Ovary (tissue), 10 donors: ENCODE measurements at regions of chr2 and their contacts with region 1.

Region 1: DNA sequence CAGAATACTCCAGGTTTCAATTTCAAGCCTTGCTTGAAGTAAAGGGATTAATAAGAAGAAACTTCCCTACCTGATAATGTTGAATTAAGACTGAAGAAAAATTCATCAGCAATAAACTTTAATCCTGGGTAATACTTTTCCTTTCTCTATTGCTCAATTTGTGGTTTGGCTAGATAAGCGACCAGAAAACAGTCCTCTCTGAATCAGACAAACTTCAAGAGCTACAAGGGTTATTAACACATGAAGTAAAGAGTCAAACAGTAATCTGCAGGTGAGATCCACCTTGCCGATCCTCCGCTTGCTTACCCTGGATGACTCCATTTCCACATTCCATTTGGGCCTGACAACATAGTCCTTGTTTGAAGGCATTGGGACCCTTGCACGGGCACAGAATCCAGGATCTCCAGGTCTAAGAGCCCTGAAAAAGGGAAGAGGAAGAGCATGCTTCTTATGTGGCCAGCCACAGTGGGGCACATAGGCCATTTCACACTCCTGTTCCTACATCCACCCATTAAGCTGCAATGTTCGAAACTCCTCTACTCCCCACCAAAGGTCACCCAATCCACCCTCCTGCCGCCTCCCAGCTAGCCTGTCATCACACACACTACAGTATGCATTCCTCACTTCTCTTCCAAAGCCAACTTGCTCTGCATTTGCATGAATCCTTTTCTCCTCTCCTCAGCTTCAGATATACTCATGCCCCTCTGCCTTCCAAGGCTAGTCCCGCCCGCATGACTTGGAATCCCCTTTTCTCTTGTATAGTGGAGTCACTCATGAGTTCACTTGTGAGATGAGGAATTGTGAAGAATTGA is 39.8 kb downstream of the IWS1 start:
- DNase-seq: no peak
- H3K4me3 ChIP-seq: no peak overlapping the region
- H3K27ac ChIP-seq: no peak overlapping the region
- H3K4me1 ChIP-seq: no peaks in the 10 kb centered on the region
- H3K27me3 ChIP-seq: no peaks in the 10 kb centered on the region
- CTCF ChIP-seq: no peak
- EP300 ChIP-seq: no peak
- POLR2A ChIP-seq: no peak

Region 2: DNA sequence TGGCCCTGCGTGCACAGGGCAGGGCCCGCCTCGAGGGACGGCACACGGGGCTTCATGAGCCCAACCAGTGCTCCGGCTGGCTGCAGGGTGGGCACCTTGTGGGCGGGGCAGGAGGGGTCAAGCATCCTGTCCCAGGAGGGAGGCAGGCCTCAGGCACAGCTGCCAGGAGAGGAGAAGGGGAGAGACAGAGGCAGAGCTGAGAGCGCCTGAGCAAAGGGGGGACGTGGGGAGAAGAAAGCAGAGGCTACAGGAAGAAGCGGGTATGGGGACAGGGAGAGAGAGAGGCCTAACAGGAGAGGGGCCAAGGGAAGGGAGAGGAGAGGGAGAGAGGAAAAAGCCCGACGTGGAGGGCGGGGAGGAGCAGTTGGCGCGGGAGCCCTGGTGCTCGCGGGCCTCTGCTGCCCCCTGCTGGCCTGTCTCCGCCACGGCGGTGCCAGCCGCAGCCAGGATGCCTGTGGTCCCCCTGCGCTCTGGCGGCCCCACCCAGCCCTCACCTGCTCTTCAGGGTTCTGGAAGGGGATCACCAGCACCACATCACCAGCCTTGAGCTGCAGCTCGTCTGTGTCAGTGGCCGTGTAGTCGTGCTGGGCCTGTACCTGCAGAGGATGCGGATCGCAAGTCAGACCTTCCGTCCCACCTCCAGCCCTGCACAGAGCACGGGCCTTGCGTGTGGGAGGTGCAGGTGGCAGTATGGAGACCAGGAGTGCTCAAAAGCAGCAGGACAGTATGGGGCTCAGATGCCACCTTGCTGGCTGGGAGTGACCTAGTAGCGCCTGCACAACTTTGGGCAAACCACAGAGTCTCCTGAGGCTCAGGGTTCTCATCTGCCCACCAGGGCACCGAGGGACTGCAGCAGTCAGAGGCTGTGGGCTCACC is 436.3 kb before region 1 on chr2:
- intact Hi-C with region 1: no loop called
- DNase-seq: peak; percentile 54 to 79 (median 74)
- H3K4me3 ChIP-seq: no peak overlapping the region
- H3K27ac ChIP-seq: no peak overlapping the region
- H3K4me1 ChIP-seq: no peaks in the 10 kb centered on the region
- H3K27me3 ChIP-seq: no peaks in the 10 kb centered on the region
- CTCF ChIP-seq: peak; percentile 67 to 96 (median 85)
- EP300 ChIP-seq: no peak
- POLR2A ChIP-seq: no peak

Region 3: DNA sequence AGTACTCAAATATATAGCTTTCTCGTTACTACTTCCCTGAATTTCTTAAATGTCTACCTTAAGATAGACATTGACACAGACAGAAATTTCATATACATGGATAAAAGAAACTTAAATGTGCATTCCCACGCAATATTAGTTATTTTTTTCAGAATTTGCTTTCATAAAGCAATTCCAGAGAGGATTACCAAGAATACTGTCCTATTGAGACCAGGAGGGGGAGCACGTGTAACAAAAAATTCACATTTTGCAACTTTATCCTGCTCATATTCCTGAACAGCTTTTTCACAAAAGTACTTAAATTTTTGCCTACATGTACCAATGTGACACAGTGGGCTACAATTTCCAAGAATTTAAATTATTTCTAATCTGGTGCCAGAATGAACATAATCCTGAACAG is 161.8 kb before region 1 on chr2:
- intact Hi-C with region 1: loop called in 3 of 4 experiments (anchors 5 to 10 kb)
- DNase-seq: peak in 1 of 5 donors; percentile 19
- H3K4me3 ChIP-seq: no peak overlapping the region
- H3K27ac ChIP-seq: no peak overlapping the region
- H3K4me1 ChIP-seq: no peaks in the 10 kb centered on the region
- H3K27me3 ChIP-seq: no peaks in the 10 kb centered on the region
- CTCF ChIP-seq: peak in 1 of 3 donors; percentile 45
- EP300 ChIP-seq: no peak
- POLR2A ChIP-seq: no peak